ENCODE measurements at regions of chr10 and their contacts with region 1.

Region 1: GRCh38 chr10:43689955-43690771 is 41.5 kb upstream of the ZNF32 start:
- DNase-seq: peak; percentile 77 to 88 (median 84)
- H3K4me3 ChIP-seq: peak overlapping the region; percentile 52 to 83 (median 75)
- H3K27ac ChIP-seq: no peak overlapping the region
- H3K4me1 ChIP-seq: peaks cover 0 to 15% (median 14%) of the 10 kb centered on the region in 4 experiments
- H3K27me3 ChIP-seq: peaks cover 4 to 33% (median 11%) of the 10 kb centered on the region in 5 experiments

Region 2: DNA sequence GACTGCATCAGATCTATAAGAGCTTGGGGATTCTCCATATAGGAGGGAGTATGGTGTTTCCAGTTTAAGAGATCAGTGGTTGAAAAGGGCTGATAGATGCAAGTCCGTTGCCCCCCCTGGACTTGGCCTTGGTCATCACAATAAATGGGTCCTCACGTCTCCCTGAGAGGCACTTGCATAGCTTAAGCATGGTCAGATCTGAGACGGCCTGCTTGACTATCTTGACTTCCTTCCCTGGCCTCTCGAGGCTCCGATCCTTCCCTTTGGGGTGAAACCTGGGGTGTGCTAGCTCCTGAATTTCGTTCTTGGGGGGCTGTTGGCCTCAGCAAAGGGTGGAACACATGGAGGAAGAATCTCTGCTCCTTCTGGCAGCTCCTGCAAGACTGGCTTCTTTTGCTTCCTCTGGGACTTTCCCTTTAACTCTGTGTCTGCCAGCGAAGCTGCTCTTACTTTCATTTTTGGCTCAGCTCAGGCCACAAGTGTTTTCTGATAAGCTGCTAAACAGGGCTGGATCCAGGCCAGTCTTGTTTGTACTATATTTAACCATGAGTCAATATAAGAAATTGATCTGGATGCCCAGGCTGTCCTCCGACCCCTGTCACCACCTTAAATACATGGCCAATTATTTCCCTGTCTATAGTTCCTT is 95.1 kb before region 1 on chr10:
- CTCF ChIA-PET with region 1: no interaction called
- POLR2A ChIA-PET with region 1: no interaction called
- DNase-seq: peak; percentile 58 to 86 (median 86)
- H3K4me3 ChIP-seq: peak overlapping the region; percentile 28 to 76 (median 42)
- H3K27ac ChIP-seq: peak overlapping the region in 1 of 2 experiments; percentile 36
- H3K4me1 ChIP-seq: peaks cover 8 to 33% (median 27%) of the 10 kb centered on the region in 4 experiments
- H3K27me3 ChIP-seq: no peaks in the 10 kb centered on the region

Region 3: DNA sequence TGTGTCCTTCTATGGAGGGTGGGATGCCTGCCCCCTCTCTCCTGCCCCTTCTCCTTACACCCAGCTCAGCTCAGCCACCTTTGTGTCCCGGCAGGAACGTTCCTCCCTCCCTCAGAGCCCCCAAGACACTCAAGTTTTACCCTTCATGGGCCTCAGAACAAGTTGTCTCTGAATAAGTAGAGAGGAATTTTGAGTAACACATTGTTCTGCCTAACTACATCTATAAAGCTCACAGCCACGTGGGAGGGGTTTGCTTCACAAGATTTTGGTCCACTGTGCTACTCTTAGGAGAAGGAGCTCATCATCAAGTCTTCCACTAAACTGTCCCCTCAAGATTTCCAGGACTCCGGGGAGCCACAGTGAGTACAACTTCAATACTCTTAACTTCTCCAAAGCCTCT is 10.1 kb after region 1 on chr10:
- CTCF ChIA-PET with region 1: interaction called, 10 read pairs
- POLR2A ChIA-PET with region 1: no interaction called
- DNase-seq: no peak
- H3K4me3 ChIP-seq: no peak overlapping the region
- H3K27ac ChIP-seq: no peak overlapping the region
- H3K4me1 ChIP-seq: peaks cover 0 to 10% (median 9%) of the 10 kb centered on the region in 4 experiments
- H3K27me3 ChIP-seq: no peaks in the 10 kb centered on the region

Region 4: GRCh38 chr10:43739161-43739560 is 49.0 kb after region 1 on chr10:
- CTCF ChIA-PET with region 1: no interaction called
- POLR2A ChIA-PET with region 1: no interaction called
- DNase-seq: no peak
- H3K4me3 ChIP-seq: no peak overlapping the region
- H3K27ac ChIP-seq: no peak overlapping the region
- H3K4me1 ChIP-seq: no peaks in the 10 kb centered on the region
- H3K27me3 ChIP-seq: peaks cover 0 to 4% (median 0%) of the 10 kb centered on the region in 5 experiments

Region 5: GRCh38 chr10:43781480-43782361 is 91.6 kb after region 1 on chr10:
- CTCF ChIA-PET with region 1: interaction called, 36 read pairs
- POLR2A ChIA-PET with region 1: no interaction called
- DNase-seq: peak; percentile 76 to 95 (median 92)
- H3K4me3 ChIP-seq: peak overlapping the region in 3 of 7 experiments; percentile 22 to 47 (median 45)
- H3K27ac ChIP-seq: no peak overlapping the region
- H3K4me1 ChIP-seq: peaks cover 4 to 27% (median 24%) of the 10 kb centered on the region in 4 experiments
- H3K27me3 ChIP-seq: peaks cover 0 to 2% (median 0%) of the 10 kb centered on the region in 5 experiments

Region 6: GRCh38 chr10:44030143-44030542 is 340.0 kb after region 1 on chr10:
- CTCF ChIA-PET with region 1: interaction called, 26 read pairs
- POLR2A ChIA-PET with region 1: no interaction called
- DNase-seq: peak; percentile 49 to 79 (median 77)
- H3K4me3 ChIP-seq: no peak overlapping the region
- H3K27ac ChIP-seq: no peak overlapping the region
- H3K4me1 ChIP-seq: peaks cover 0 to 2% (median 0%) of the 10 kb centered on the region in 4 experiments
- H3K27me3 ChIP-seq: peaks cover 0 to 5% (median 0%) of the 10 kb centered on the region in 5 experiments

Measured in common myeloid progenitor, CD34-positive (primary cell).